Naive thymus-derived CD4-positive, alpha-beta T cell (primary cell): ENCODE measurements at regions of chr3 and their contacts with region 1.

Region 1: DNA sequence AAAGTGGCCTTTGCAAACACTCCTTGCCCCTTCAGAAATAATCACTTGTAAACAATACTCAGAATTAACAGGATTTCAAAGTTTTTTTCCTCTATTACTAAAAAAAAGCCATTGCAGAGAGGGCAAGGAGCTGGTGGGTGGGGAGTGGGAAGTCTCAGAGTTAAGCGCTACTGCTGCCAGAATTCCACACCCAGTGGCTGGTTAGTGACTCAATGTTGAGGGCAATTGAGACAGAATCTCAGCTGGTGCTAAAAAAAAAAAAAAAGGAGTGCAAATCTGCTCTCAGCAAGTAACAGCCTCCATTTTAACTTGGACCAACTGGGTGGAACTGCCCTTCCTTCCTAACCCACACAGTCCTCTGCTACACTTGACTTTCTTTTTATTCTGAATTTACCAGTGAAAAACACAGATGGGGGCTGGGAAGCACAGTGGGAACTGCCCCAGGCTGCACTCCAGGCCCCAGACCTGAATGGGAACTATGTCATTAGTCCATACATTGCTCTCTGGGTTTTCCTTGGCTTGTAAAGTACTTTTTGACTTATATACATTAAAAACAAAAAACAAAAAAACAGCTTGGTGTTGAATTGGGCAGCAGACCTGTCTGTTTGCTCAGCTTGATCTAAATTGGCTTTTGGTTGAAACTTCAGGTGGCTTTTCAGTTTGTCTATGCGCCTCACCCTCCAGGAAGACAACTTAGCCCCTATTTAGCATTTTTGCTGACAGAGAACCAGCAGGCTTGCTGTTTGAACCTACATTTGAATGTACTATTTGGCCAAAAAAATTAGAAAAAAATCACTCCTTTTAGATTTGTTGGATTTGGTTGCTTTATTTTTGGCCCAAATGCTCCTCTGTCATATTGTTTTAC is 357.8 kb upstream of the TBL1XR1 start:
- DNase-seq: no peak
- ATAC-seq: peak; percentile 18
- H3K4me3 ChIP-seq: no peak overlapping the region
- H3K4me3 Mint-ChIP-seq: peak overlapping the region in 3 of 10 donors; percentile 7 to 43 (median 8)
- H3K27ac ChIP-seq: no peak overlapping the region
- H3K27ac Mint-ChIP-seq: peak overlapping the region in 5 of 9 donors; percentile 7 to 53 (median 48)
- H3K4me1 ChIP-seq: peaks cover 9 to 28% of the 10 kb centered on the region in 2 donors
- H3K4me1 Mint-ChIP-seq: peaks cover 16 to 72% (median 57%) of the 10 kb centered on the region in 7 donors
- H3K27me3 ChIP-seq: no peaks in the 10 kb centered on the region
- H3K27me3 Mint-ChIP-seq: no peaks in the 10 kb centered on the region

Region 2: GRCh38 chr3:177410730-177411129 is 144.4 kb before region 1 on chr3:
- CTCF ChIA-PET with region 1: no interaction called
- POLR2A ChIA-PET with region 1: no interaction called
- intact Hi-C with region 1: no loop called
- DNase-seq: peak in 5 of 9 donors; percentile 16 to 28 (median 22)
- ATAC-seq: no peak
- H3K4me3 ChIP-seq: no peak overlapping the region
- H3K4me3 Mint-ChIP-seq: peak overlapping the region in 8 of 10 donors; percentile 1 to 65 (median 40)
- H3K27ac ChIP-seq: no peak overlapping the region
- H3K27ac Mint-ChIP-seq: peak overlapping the region in 5 of 9 donors; percentile 5 to 88 (median 9)
- H3K4me1 ChIP-seq: peaks cover 8 to 9% of the 10 kb centered on the region in 2 donors
- H3K4me1 Mint-ChIP-seq: peaks cover 4 to 18% (median 13%) of the 10 kb centered on the region in 7 donors
- H3K27me3 ChIP-seq: no peaks in the 10 kb centered on the region
- H3K27me3 Mint-ChIP-seq: peaks cover 0 to 2% (median 0%) of the 10 kb centered on the region in 5 donors

Region 3: DNA sequence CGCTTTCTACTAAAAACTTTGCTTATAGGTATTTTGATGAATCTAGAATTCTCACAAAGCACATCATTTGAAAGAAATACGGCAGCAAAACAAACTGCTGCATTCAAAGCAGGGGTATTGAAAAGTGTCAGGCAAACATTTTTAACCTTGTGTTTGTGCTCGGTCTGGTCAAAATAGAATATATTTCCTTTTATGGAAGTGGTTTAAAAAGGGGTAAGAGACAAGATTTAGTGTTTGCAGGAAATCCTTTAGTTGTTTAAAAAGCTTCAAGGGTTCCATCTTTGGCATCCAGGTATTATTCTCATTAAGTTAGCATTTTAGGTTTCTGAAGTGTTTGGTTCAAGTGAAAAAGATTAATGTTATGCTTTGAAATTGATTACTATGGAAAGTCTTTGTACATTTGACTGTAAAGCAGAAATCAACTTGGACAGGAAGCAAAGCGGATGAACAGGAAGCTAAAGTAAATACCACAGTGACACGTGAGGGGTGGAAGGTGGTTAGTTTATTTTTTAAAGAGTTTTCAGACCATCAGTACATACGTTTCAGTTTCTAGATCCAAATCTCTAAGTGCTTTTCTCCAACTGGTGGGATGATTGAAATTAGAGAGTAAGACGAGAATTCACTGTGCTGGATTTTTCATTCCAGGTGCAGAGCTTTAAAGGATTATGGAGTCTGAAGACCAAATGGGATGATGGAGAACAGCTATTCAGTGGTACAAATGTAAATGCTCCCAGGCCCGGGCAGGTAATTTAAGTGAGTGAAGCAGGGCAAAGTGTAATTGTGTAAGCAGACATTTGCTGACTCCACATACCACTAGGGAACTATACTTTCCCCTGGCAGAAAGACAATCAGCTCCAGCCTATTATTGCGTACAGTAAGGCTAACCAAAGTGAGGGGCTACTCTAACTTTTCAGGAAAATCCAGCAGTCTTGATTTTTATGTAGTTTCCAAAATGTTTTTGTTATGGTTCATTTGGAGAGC is 16.1 kb before region 1 on chr3:
- CTCF ChIA-PET with region 1: interaction called, 4 read pairs
- POLR2A ChIA-PET with region 1: interaction called, 4 read pairs
- intact Hi-C with region 1: loop called in 1 of 2 experiments (anchors 1 kb)
- DNase-seq: peak in 6 of 9 donors; percentile 15 to 52 (median 40)
- ATAC-seq: peak; percentile 74
- H3K4me3 ChIP-seq: peak overlapping the region; percentile 32
- H3K4me3 Mint-ChIP-seq: peak overlapping the region; percentile 58 to 81 (median 78)
- H3K27ac ChIP-seq: no peak overlapping the region
- H3K27ac Mint-ChIP-seq: peak overlapping the region; percentile 70 to 84 (median 81)
- H3K4me1 ChIP-seq: peaks cover 32 to 36% of the 10 kb centered on the region in 2 donors
- H3K4me1 Mint-ChIP-seq: peaks cover 21 to 67% (median 47%) of the 10 kb centered on the region in 7 donors
- H3K27me3 ChIP-seq: no peaks in the 10 kb centered on the region
- H3K27me3 Mint-ChIP-seq: no peaks in the 10 kb centered on the region

Region 4: GRCh38 chr3:177569875-177570657 is 14.9 kb after region 1 on chr3:
- CTCF ChIA-PET with region 1: no interaction called
- POLR2A ChIA-PET with region 1: no interaction called
- intact Hi-C with region 1: loop called in 1 of 2 experiments (anchors 2 kb)
- DNase-seq: no peak
- ATAC-seq: peak; percentile 52
- H3K4me3 ChIP-seq: no peak overlapping the region
- H3K4me3 Mint-ChIP-seq: no peak overlapping the region
- H3K27ac ChIP-seq: no peak overlapping the region
- H3K27ac Mint-ChIP-seq: no peak overlapping the region
- H3K4me1 ChIP-seq: no peaks in the 10 kb centered on the region
- H3K4me1 Mint-ChIP-seq: peaks cover 0 to 11% (median 5%) of the 10 kb centered on the region in 7 donors
- H3K27me3 ChIP-seq: no peaks in the 10 kb centered on the region
- H3K27me3 Mint-ChIP-seq: no peaks in the 10 kb centered on the region

Region 5: GRCh38 chr3:177646749-177647148 is 91.6 kb after region 1 on chr3:
- CTCF ChIA-PET with region 1: no interaction called
- POLR2A ChIA-PET with region 1: no interaction called
- intact Hi-C with region 1: loop called in 1 of 2 experiments (anchors 5 kb)
- DNase-seq: peak in 4 of 9 donors; percentile 21 to 43 (median 34)
- ATAC-seq: peak; percentile 59
- H3K4me3 ChIP-seq: no peak overlapping the region
- H3K4me3 Mint-ChIP-seq: peak overlapping the region in 9 of 10 donors; percentile 21 to 78 (median 53)
- H3K27ac ChIP-seq: no peak overlapping the region
- H3K27ac Mint-ChIP-seq: peak overlapping the region in 5 of 9 donors; percentile 16 to 70 (median 51)
- H3K4me1 ChIP-seq: peaks cover 42 to 58% of the 10 kb centered on the region in 2 donors
- H3K4me1 Mint-ChIP-seq: peaks cover 39 to 68% (median 63%) of the 10 kb centered on the region in 7 donors
- H3K27me3 ChIP-seq: no peaks in the 10 kb centered on the region
- H3K27me3 Mint-ChIP-seq: no peaks in the 10 kb centered on the region

Region 6: DNA sequence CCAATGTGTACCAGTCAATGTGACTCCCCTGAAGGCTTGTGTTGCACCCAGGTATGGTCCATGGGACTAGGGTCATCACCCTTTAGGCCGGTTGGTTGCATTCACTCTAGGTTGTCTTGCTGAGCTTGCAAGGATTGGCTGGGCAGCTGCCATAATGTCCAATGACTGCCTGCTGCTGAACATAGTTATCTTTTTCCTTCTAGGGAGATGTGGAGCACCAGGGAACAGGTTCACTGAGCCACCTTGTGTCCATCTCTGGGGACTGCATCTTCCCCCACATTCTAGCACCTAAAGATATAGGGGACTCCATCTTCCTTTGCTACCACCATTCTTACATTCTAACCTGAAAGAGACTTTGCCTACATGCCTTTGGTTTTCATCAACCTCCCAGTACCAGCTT is 222.6 kb after region 1 on chr3:
- CTCF ChIA-PET with region 1: no interaction called
- POLR2A ChIA-PET with region 1: no interaction called
- intact Hi-C with region 1: loop called in 1 of 2 experiments (anchors 5 kb)
- DNase-seq: peak in 5 of 9 donors; percentile 10 to 35 (median 26)
- ATAC-seq: peak; percentile 65
- H3K4me3 ChIP-seq: no peak overlapping the region
- H3K4me3 Mint-ChIP-seq: peak overlapping the region in 1 of 10 donors; percentile 16
- H3K27ac ChIP-seq: no peak overlapping the region
- H3K27ac Mint-ChIP-seq: peak overlapping the region in 3 of 9 donors; percentile 21 to 55 (median 29)
- H3K4me1 ChIP-seq: peaks cover 9 to 18% of the 10 kb centered on the region in 2 donors
- H3K4me1 Mint-ChIP-seq: peaks cover 13 to 20% (median 15%) of the 10 kb centered on the region in 7 donors
- H3K27me3 ChIP-seq: no peaks in the 10 kb centered on the region
- H3K27me3 Mint-ChIP-seq: no peaks in the 10 kb centered on the region

Region 7: GRCh38 chr3:178385280-178385952 is 830.3 kb after region 1 on chr3:
- CTCF ChIA-PET with region 1: no interaction called
- POLR2A ChIA-PET with region 1: no interaction called
- intact Hi-C with region 1: loop called in 1 of 2 experiments (anchors 10 kb)
- DNase-seq: peak in 5 of 9 donors; percentile 23 to 44 (median 41)
- ATAC-seq: peak; percentile 56
- H3K4me3 ChIP-seq: no peak overlapping the region
- H3K4me3 Mint-ChIP-seq: no peak overlapping the region
- H3K27ac ChIP-seq: no peak overlapping the region
- H3K27ac Mint-ChIP-seq: peak overlapping the region in 1 of 9 donors; percentile 4
- H3K4me1 ChIP-seq: no peaks in the 10 kb centered on the region
- H3K4me1 Mint-ChIP-seq: no peaks in the 10 kb centered on the region
- H3K27me3 ChIP-seq: no peaks in the 10 kb centered on the region
- H3K27me3 Mint-ChIP-seq: peaks cover 0 to 12% (median 4%) of the 10 kb centered on the region in 5 donors